ENCODE measurements at regions of chr5 and their contacts with region 1.

Region 1: GRCh38 chr5:164204338-164204946 is 699.0 kb downstream of the MAT2B start:
- DNase-seq: no peak
- H3K4me3 ChIP-seq: no peak overlapping the region
- CTCF ChIP-seq: no peak
- POLR2A ChIP-seq: no peak

Region 2: DNA sequence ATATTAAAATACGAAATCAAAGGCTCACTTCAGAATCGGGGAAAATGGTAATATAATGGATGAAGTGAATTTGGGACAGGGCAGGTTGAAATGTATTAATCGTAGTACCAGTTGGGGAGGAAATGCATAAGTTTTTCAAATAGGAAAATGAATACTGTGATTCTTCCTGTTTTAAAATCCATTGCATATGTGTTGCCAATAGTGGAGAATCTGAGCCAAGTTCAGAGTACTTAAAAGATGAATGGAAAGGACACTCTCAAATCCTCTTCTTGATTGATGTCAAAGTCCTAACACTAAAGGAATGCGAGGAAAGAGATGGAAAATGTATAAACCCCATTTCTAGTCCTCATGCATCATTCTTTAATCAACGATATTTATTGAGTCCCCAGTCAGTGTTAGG is 928.0 kb before region 1 on chr5:
- intact Hi-C with region 1: loop called (anchors 5 kb)
- DNase-seq: no peak
- H3K4me3 ChIP-seq: no peak overlapping the region
- CTCF ChIP-seq: no peak
- POLR2A ChIP-seq: no peak

Region 3: GRCh38 chr5:164296603-164297080 is 92.2 kb after region 1 on chr5:
- intact Hi-C with region 1: no loop called
- DNase-seq: no peak
- H3K4me3 ChIP-seq: no peak overlapping the region
- CTCF ChIP-seq: no peak
- POLR2A ChIP-seq: no peak

Measured in lower leg skin (tissue), 4 donors.